PC-9 (cell line): ENCODE measurements at regions of chr14 and their contacts with region 1.

Region 1: DNA sequence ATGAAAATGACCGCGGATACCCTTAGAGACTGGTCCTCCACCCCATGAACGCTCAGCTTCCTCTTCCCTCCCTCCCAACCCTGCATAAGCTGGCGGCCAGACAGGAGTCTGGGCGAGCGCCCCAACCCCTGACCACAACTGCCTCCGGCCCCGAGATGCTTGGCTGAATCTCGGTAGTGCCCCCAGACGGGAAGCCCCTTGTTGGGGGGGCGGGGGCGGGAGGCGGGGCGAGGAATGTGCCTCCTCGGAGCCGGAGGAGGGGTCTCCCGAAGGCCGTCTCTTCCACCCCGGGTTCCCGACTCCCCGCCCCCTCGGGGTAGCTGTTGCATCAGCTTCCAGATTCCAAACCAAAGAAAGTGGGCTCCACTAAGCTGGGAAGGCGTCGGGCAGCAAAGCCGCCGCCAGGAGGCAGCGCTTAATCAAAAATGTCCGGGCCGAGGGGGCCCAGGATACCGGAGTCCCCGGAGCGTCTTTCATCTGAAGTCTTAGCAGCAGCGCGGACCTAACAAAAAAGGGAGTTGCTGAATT is 7.1 kb upstream of the MRPL52 start:
- DNase-seq: peak in 1 of 2 experiments; percentile 44
- H3K4me3 ChIP-seq: no peak overlapping the region
- H3K27ac ChIP-seq: no peak overlapping the region
- H3K4me1 ChIP-seq: peaks cover 38% of the 10 kb centered on the region
- H3K27me3 ChIP-seq: no peaks in the 10 kb centered on the region
- CTCF ChIP-seq: no peak

Region 2: GRCh38 chr14:22668417-22668816 is 154.2 kb before region 1 on chr14:
- CTCF ChIA-PET with region 1: no interaction called
- POLR2A ChIA-PET with region 1: no interaction called
- intact Hi-C with region 1: no loop called
- DNase-seq: peak in 1 of 2 experiments; percentile 38
- H3K4me3 ChIP-seq: no peak overlapping the region
- H3K27ac ChIP-seq: no peak overlapping the region
- H3K4me1 ChIP-seq: no peaks in the 10 kb centered on the region; the same call in none of the 2 replicates
- H3K27me3 ChIP-seq: no peaks in the 10 kb centered on the region
- CTCF ChIP-seq: no peak

Region 3: DNA sequence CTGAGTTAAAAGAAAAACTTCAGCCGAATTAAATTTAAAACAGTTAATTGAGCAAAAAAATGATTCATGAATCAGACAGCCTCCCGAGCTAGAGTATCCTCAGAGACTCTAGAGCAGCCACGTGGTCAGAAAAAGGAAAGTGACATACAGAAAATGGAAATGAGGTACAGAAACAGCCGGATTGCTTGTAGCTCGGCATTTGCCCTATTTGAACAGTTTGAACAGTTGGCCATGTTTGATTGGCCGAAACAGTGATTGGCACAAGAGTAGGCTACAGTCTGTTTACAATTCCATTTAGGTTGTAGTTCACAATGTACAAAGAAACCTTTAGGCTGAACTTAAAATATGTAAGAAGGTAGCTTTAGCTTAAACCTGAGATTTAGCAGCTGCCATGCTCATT is 69.0 kb before region 1 on chr14:
- CTCF ChIA-PET with region 1: no interaction called
- POLR2A ChIA-PET with region 1: interaction called, 11 read pairs
- intact Hi-C with region 1: no loop called
- DNase-seq: no peak
- H3K4me3 ChIP-seq: no peak overlapping the region
- H3K27ac ChIP-seq: no peak overlapping the region
- H3K4me1 ChIP-seq: no peaks in the 10 kb centered on the region
- H3K27me3 ChIP-seq: no peaks in the 10 kb centered on the region
- CTCF ChIP-seq: no peak

Region 4: GRCh38 chr14:22781586-22781991 is 41.0 kb before region 1 on chr14:
- CTCF ChIA-PET with region 1: no interaction called
- POLR2A ChIA-PET with region 1: interaction called, 12 read pairs
- intact Hi-C with region 1: loop called (anchors 2 kb)
- DNase-seq: no peak
- H3K4me3 ChIP-seq: no peak overlapping the region
- H3K27ac ChIP-seq: no peak overlapping the region
- H3K4me1 ChIP-seq: no peaks in the 10 kb centered on the region
- H3K27me3 ChIP-seq: no peaks in the 10 kb centered on the region
- CTCF ChIP-seq: no peak

Region 5: GRCh38 chr14:22872033-22872832 is 49.6 kb after region 1 on chr14:
- CTCF ChIA-PET with region 1: interaction called, 6 read pairs
- POLR2A ChIA-PET with region 1: interaction called, 11 read pairs
- intact Hi-C with region 1: no loop called
- DNase-seq: peak; percentile 69 to 79
- H3K4me3 ChIP-seq: peak overlapping the region; percentile 83
- H3K27ac ChIP-seq: peak overlapping the region; percentile 95
- H3K4me1 ChIP-seq: peaks cover 17% of the 10 kb centered on the region
- H3K27me3 ChIP-seq: no peaks in the 10 kb centered on the region
- CTCF ChIP-seq: peak; percentile 91

Region 6: DNA sequence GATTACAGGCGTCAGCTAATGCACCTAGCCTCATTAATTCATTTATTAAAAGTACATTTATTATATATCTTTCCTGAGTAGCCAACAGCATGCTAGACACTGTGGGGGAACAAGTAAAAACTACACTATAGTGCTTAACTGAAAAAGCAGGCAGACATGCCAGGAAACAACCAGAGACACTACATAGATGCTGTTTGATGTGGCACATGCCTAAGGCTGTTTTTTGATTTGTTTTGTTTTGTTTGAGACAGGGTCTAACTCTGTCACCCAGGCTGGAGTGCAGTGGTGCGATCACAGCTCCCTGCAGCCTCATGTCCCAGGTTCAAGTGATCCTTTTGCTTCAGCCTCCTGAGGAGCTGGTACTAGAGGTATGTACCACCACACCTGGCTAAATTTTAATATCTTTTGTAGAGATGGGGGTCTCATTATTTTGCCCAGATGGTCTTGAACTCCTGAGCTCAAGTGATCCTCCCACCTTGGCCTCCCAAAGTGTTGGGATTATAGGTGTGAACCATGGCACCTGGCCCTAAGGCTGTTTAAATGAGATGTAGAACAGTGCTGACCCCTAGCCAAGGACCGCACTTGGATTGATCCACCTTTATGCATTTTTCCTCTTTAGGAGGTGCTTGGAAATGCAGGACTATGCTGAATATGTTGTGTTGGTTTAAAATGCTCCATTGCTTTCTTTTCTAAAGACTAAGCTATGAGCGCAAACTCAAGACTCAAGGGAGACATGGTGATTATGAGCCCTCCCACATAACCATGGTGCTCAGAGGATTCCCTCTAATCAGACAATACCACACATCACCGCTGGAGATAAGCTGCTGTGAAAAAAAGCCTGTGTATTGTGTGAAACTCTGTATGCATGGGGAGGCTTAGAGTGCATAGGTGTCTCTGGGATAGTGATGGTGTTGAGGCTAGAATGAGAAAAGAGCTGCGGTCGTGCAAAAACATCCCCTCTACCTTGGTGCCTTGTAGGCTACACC is 197.8 kb after region 1 on chr14:
- CTCF ChIA-PET with region 1: no interaction called
- POLR2A ChIA-PET with region 1: no interaction called
- intact Hi-C with region 1: no loop called
- DNase-seq: no peak
- H3K4me3 ChIP-seq: no peak overlapping the region
- H3K27ac ChIP-seq: no peak overlapping the region
- H3K4me1 ChIP-seq: no peaks in the 10 kb centered on the region
- H3K27me3 ChIP-seq: no peaks in the 10 kb centered on the region
- CTCF ChIP-seq: no peak